PC-3 (cell line): ENCODE measurements at regions of chr20 and their contacts with region 1.

Region 1: DNA sequence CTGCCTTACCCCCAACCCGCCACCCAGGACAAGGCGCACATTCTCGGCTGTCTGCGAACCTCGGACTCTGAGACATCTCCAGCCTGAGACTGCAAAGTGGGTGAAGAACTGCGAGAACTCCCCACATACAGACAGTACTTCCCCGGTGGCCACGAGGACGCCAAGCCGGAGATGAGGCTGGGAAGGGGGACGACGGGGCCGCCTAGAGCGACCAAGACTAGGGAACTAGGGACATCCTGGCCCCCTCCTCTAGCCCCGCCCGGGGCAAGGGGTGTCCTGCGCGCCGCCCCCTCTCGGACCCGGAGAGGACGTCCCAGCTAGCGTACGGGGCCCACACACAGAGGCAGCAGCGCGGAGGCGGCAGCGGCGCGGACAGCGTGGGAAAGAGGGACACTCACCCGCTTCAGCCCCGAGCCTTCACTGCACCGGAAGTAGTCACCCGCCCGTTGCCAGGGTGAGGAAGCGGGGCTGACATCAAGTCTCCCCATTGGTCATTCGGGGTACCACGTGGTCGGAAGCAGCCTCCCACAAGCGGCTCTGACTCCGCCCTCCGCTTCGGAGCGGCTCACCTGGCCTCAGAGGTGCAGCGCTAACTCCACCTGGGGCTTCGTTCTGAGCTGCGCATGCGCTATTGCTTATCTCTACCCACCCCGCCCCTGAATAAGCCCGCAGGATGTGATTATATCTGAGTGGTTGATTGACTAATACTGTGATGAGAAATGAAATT is at the start of gene TASP1:
- DNase-seq: peak; percentile 99
- ATAC-seq: peak; percentile 98
- H3K4me3 ChIP-seq: peak within 1 kb of the TSS; percentile 86
- H3K27ac ChIP-seq: peak within 1 kb of the TSS; percentile 66
- H3K4me1 ChIP-seq: peaks cover 7% of the 10 kb centered on the region
- H3K27me3 ChIP-seq: no peaks in the 10 kb centered on the region
- CTCF ChIP-seq: no peak
- total RNA-seq, gene TASP1: 10.7 and 13.9 TPM in 2 replicates

Region 2: GRCh38 chr20:13554706-13555105 is 84.0 kb before region 1 on chr20:
- CTCF ChIA-PET with region 1: no interaction called
- POLR2A ChIA-PET with region 1: no interaction called
- intact Hi-C with region 1: loop called (anchors 1 kb)
- DNase-seq: peak; percentile 91
- ATAC-seq: peak; percentile 84
- H3K4me3 ChIP-seq: no peak overlapping the region
- H3K27ac ChIP-seq: peak overlapping the region; percentile 77
- H3K4me1 ChIP-seq: peaks cover 42% of the 10 kb centered on the region
- H3K27me3 ChIP-seq: no peaks in the 10 kb centered on the region
- CTCF ChIP-seq: no peak

Region 3: DNA sequence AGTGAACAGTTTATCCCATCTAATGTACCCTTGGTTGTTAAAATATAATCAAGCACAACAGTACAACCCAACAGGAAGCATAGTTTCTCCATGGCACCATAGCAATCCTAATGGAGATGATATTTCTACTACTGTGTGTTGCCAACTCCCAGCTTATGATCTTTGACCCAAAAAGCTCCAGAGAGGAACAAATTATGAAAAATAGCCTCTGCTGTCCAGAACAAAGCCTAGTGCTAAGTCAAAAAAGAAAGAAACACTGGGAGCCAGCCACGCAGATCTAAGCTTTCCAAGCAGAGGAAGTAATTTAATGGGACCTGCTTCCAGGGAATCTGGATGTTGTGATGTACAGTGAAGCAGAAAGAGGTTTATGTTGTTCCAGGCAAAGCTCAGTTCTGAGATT is 52.3 kb after region 1 on chr20:
- CTCF ChIA-PET with region 1: no interaction called
- POLR2A ChIA-PET with region 1: no interaction called
- intact Hi-C with region 1: no loop called
- DNase-seq: no peak
- ATAC-seq: no peak
- H3K4me3 ChIP-seq: no peak overlapping the region
- H3K27ac ChIP-seq: no peak overlapping the region
- H3K4me1 ChIP-seq: no peaks in the 10 kb centered on the region
- H3K27me3 ChIP-seq: peaks cover 26% of the 10 kb centered on the region
- CTCF ChIP-seq: no peak